ENCODE measurements at regions of chr12 and their contacts with region 1.

Region 1: DNA sequence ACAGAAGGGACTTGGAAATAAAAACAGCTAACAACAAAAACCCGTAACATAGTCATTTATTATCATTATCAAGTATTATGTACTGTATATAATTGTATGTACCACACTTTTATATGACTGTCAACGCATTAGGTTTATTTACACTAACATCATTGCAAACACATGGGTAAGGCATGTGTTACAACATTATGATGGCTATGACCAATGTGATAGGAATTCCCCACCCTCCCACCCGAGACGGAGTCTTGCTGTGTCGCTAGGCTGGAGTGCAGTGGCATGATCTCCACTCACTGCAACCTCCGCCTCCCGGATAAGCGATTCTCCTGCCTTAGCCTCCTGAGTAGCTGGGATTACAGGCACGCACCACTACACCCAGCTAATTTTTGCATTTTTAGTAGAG is 82.6 kb downstream of the ERC1 start:
- DNase-seq: no peak
- H3K4me3 ChIP-seq: no peak overlapping the region
- H3K27ac ChIP-seq: no peak overlapping the region
- H3K4me1 ChIP-seq: peaks cover 0 to 24% (median 12%) of the 10 kb centered on the region in 4 donors
- H3K27me3 ChIP-seq: no peaks in the 10 kb centered on the region
- CTCF ChIP-seq: no peak
- EP300 ChIP-seq: no peak
- POLR2A ChIP-seq: no peak

Region 2: GRCh38 chr12:989751-990660 is 83.6 kb before region 1 on chr12:
- in situ Hi-C with region 1: no loop called
- intact Hi-C with region 1: loop called (anchors 10 kb)
- DNase-seq: peak; percentile 72
- H3K4me3 ChIP-seq: peak overlapping the region; percentile 58 to 95 (median 82)
- H3K27ac ChIP-seq: peak overlapping the region; percentile 95 to 98 (median 96)
- H3K4me1 ChIP-seq: peaks cover 21 to 41% (median 30%) of the 10 kb centered on the region in 4 donors
- H3K27me3 ChIP-seq: no peaks in the 10 kb centered on the region
- CTCF ChIP-seq: peak in 1 of 5 experiments; percentile 11
- EP300 ChIP-seq: no peak
- POLR2A ChIP-seq: no peak

Region 3: GRCh38 chr12:1044696-1045095 is 29.0 kb before region 1 on chr12:
- in situ Hi-C with region 1: no loop called
- intact Hi-C with region 1: loop called (anchors 2 kb)
- DNase-seq: no peak
- H3K4me3 ChIP-seq: no peak overlapping the region
- H3K27ac ChIP-seq: no peak overlapping the region
- H3K4me1 ChIP-seq: peaks cover 0 to 16% (median 5%) of the 10 kb centered on the region in 4 donors
- H3K27me3 ChIP-seq: no peaks in the 10 kb centered on the region
- CTCF ChIP-seq: no peak
- EP300 ChIP-seq: no peak
- POLR2A ChIP-seq: no peak